OCI-LY7 (cell line): ENCODE measurements at regions of chr10 and their contacts with region 1.

Region 1: GRCh38 chr10:90047243-90047729 is 345.9 kb downstream of the KIF20B start:
- DNase-seq: peak; percentile 80
- H3K4me3 ChIP-seq: peak overlapping the region; percentile 5
- H3K27ac ChIP-seq: peak overlapping the region; percentile 85
- H3K4me1 ChIP-seq: peaks cover 33% of the 10 kb centered on the region
- CTCF ChIP-seq: no peak

Region 2: DNA sequence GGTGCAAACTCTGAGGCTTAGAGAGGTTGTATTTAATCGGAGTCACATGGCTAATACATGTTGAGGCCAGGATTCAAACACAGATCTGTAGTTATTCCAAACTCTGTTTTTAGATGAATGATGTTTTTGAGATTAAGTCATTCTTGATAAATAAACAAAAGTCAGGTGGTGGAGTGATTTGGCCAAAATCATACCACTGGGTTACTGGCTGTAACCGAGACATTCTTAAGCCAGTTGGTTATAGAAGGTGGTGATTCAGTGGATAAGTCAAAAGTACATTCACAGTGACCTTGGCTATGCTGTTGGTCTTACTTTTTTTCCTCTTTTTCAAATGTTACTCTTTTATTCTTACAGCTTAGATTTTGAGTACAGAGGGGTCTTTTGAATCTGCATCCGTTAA is 15.5 kb after region 1 on chr10:
- CTCF ChIA-PET with region 1: no interaction called
- POLR2A ChIA-PET with region 1: interaction called, 10 read pairs
- intact Hi-C with region 1: no loop called
- DNase-seq: no peak
- H3K4me3 ChIP-seq: no peak overlapping the region
- H3K27ac ChIP-seq: no peak overlapping the region
- H3K4me1 ChIP-seq: no peaks in the 10 kb centered on the region
- CTCF ChIP-seq: no peak

Region 3: GRCh38 chr10:90424730-90425129 is 377.4 kb after region 1 on chr10:
- CTCF ChIA-PET with region 1: no interaction called
- POLR2A ChIA-PET with region 1: no interaction called
- intact Hi-C with region 1: no loop called
- DNase-seq: no peak
- H3K4me3 ChIP-seq: no peak overlapping the region
- H3K27ac ChIP-seq: no peak overlapping the region
- H3K4me1 ChIP-seq: no peaks in the 10 kb centered on the region
- CTCF ChIP-seq: no peak